Natural killer cell (primary cell): ENCODE measurements at regions of chr15 and their contacts with region 1.

Region 1: DNA sequence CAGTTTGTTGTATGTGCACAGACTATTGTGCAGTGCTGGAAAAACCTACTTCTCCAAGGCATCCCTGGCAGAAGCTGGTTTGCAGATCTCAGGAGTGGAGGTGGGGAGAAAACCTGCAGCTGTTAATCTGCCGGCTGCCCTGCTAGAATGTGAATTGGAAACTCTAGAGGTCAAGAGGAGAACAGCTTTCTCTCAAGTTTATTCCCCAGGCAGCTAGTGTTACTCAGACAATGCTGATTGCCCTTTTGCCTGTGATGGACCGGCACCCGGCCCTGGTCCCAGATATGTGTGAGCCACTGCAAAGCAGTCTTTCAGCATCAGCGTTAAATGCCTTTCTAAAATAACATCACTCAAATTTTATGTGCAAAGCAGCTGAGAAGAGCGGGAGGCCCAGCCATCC is 129.7 kb upstream of the TPM1 start:
- DNase-seq: no peak
- ATAC-seq: no peak
- H3K4me3 ChIP-seq: no peak overlapping the region
- H3K4me3 Mint-ChIP-seq: no peak overlapping the region
- H3K27ac ChIP-seq: no peak overlapping the region
- H3K27ac Mint-ChIP-seq: no peak overlapping the region
- H3K4me1 ChIP-seq: no peaks in the 10 kb centered on the region
- H3K4me1 Mint-ChIP-seq: no peaks in the 10 kb centered on the region
- H3K27me3 ChIP-seq: no peaks in the 10 kb centered on the region
- H3K27me3 Mint-ChIP-seq: peaks cover 11 to 20% of the 10 kb centered on the region in 2 donors
- CTCF ChIP-seq: no peak

Region 2: GRCh38 chr15:62847900-62848489 is 64.8 kb before region 1 on chr15:
- intact Hi-C with region 1: loop called (anchors 10 kb)
- DNase-seq: peak; percentile 21 to 61
- ATAC-seq: no peak
- H3K4me3 ChIP-seq: no peak overlapping the region
- H3K4me3 Mint-ChIP-seq: no peak overlapping the region
- H3K27ac ChIP-seq: no peak overlapping the region
- H3K27ac Mint-ChIP-seq: no peak overlapping the region
- H3K4me1 ChIP-seq: no peaks in the 10 kb centered on the region
- H3K4me1 Mint-ChIP-seq: no peaks in the 10 kb centered on the region
- H3K27me3 ChIP-seq: no peaks in the 10 kb centered on the region
- H3K27me3 Mint-ChIP-seq: peaks cover 3 to 7% of the 10 kb centered on the region in 2 donors
- CTCF ChIP-seq: peak; percentile 40